ENCODE measurements at regions of chr6 and their contacts with region 1.

Region 1: GRCh38 chr6:36874443-36875249 is at the start of gene PPIL1:
- DNase-seq: peak; percentile 91 to 94 (median 92)
- H3K4me3 ChIP-seq: peak within 1 kb of the TSS; percentile 95 to 96
- H3K4me3 Mint-ChIP-seq: peak within 1 kb of the TSS; percentile 95 to 100 (median 98)
- H3K27ac ChIP-seq: peak within 1 kb of the TSS; percentile 87
- H3K27ac Mint-ChIP-seq: peak within 1 kb of the TSS; percentile 91 to 100 (median 98)
- H3K4me1 ChIP-seq: peaks cover 23% of the 10 kb centered on the region
- H3K4me1 Mint-ChIP-seq: peaks cover 22 to 37% (median 31%) of the 10 kb centered on the region in 4 donors
- H3K27me3 ChIP-seq: no peaks in the 10 kb centered on the region
- H3K27me3 Mint-ChIP-seq: peaks cover 0 to 1% of the 10 kb centered on the region in 2 donors
- total RNA-seq, gene PPIL1: 8.4 to 9.2 TPM

Region 2: GRCh38 chr6:36544228-36544627 is 330.4 kb before region 1 on chr6:
- CTCF ChIA-PET with region 1: no interaction called
- POLR2A ChIA-PET with region 1: no interaction called
- intact Hi-C with region 1: no loop called
- DNase-seq: peak; percentile 81 to 90 (median 84)
- H3K4me3 ChIP-seq: peak overlapping the region; percentile 89 to 99
- H3K4me3 Mint-ChIP-seq: peak overlapping the region; percentile 92 to 100 (median 96)
- H3K27ac ChIP-seq: peak overlapping the region; percentile 92
- H3K27ac Mint-ChIP-seq: peak overlapping the region; percentile 94 to 98 (median 96)
- H3K4me1 ChIP-seq: peaks cover 76% of the 10 kb centered on the region
- H3K4me1 Mint-ChIP-seq: peaks cover 38 to 88% (median 51%) of the 10 kb centered on the region in 4 donors
- H3K27me3 ChIP-seq: no peaks in the 10 kb centered on the region
- H3K27me3 Mint-ChIP-seq: no peaks in the 10 kb centered on the region

Region 3: DNA sequence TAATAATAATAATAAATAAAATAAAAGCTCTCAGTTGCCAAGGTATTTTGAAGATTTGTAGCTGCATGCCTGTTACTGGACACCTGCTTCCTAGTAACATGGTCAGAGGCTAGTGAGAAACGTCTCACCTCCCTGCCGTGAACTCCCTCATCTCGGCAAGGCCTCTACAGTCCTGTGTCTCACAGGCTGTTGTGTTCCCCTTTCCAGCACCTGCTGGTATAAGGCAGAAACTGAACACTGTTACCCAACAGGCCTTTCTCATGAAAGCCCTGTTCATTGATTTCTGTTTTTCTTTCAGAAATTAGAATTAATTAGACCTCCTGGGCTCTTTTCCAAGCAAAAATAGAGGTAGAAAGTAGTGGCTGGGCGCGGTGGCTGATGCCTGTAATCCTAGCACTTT is 298.1 kb before region 1 on chr6:
- CTCF ChIA-PET with region 1: no interaction called
- POLR2A ChIA-PET with region 1: no interaction called
- intact Hi-C with region 1: no loop called
- DNase-seq: no peak
- H3K4me3 ChIP-seq: no peak overlapping the region
- H3K4me3 Mint-ChIP-seq: no peak overlapping the region
- H3K27ac ChIP-seq: no peak overlapping the region
- H3K27ac Mint-ChIP-seq: no peak overlapping the region
- H3K4me1 ChIP-seq: no peaks in the 10 kb centered on the region
- H3K4me1 Mint-ChIP-seq: peaks cover 4 to 10% (median 7%) of the 10 kb centered on the region in 4 donors
- H3K27me3 ChIP-seq: no peaks in the 10 kb centered on the region
- H3K27me3 Mint-ChIP-seq: no peaks in the 10 kb centered on the region

Region 4: DNA sequence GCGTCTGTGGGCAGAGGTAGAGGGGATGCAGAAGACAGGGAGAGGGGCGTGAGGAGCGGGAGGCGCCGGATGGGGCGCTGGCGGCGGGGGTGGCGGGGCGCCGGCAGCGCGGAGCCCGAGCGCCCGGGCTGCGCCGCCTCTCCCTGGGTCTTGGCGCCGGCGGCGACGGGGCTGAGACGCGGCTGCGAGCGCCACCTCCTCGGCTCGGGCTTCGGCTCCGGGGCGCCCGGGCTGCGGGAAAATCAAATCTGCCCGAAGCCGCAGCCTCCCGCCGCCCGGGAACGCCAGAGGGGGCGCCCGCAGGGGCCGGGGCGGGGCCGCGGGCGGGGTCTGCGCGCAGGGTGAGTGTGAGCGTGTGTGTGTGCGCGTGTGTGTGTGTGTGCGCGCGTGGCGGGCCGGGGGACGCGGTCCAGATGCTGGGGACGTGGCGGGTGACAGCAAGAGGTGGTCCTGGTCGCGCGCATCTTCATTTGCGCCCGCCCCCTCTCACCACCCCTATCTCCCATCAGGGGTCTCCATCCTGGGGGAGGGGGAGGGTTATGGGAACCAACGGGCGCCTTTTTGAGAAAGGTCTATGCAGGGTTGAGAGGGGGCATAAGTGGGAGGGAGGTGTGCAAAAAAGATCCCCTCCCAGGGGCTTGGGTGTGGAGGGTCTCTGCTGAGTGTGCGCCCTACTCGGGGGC is 34.8 kb before region 1 on chr6:
- CTCF ChIA-PET with region 1: no interaction called
- POLR2A ChIA-PET with region 1: no interaction called
- intact Hi-C with region 1: no loop called
- DNase-seq: peak; percentile 47 to 56 (median 51)
- H3K4me3 ChIP-seq: peak overlapping the region in 1 of 2 donors; percentile 19
- H3K4me3 Mint-ChIP-seq: peak overlapping the region; percentile 73 to 84 (median 81)
- H3K27ac ChIP-seq: no peak overlapping the region
- H3K27ac Mint-ChIP-seq: peak overlapping the region in 1 of 7 donors; percentile 63
- H3K4me1 ChIP-seq: peaks cover 20% of the 10 kb centered on the region
- H3K4me1 Mint-ChIP-seq: peaks cover 3 to 15% (median 9%) of the 10 kb centered on the region in 4 donors
- H3K27me3 ChIP-seq: peaks cover 18% of the 10 kb centered on the region
- H3K27me3 Mint-ChIP-seq: peaks cover 4 to 19% of the 10 kb centered on the region in 2 donors

Region 5: DNA sequence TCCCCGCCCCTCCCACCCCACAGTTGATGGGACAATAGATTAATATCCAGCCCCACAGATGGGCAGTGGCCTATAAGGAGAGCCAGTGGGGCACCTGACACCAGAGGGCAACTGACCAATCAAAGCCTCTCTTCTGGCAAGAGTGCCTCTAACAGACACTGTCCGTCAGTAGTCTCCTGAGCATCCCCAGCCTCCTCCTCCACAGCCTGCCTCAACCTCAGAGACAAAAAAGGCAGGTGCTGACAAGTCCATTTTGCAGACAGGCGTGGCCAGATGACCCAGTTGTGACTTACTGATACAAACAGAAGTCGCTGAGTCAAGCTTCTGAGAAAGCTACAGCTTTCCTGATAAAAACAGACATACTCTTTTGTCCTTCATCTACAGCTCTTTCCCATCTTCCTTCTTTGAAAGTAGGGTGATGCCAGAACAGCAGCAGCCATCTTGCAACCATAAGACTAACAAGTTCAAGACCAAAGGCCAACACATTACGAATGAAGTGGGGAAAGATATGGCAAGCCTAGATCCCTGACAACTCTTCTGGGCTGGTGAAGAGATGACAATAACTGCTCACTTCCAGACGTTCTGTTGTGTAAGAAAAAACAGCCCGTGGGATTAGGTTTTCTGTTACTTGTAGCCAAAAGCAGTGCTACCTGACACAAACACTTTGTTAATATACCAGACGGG is 12.3 kb before region 1 on chr6:
- CTCF ChIA-PET with region 1: interaction called, 9 read pairs
- POLR2A ChIA-PET with region 1: interaction called, 22 read pairs
- intact Hi-C with region 1: no loop called
- DNase-seq: no peak
- H3K4me3 ChIP-seq: no peak overlapping the region
- H3K4me3 Mint-ChIP-seq: no peak overlapping the region
- H3K27ac ChIP-seq: no peak overlapping the region
- H3K27ac Mint-ChIP-seq: peak overlapping the region in 3 of 7 donors; percentile 6 to 53 (median 25)
- H3K4me1 ChIP-seq: peaks cover 16% of the 10 kb centered on the region
- H3K4me1 Mint-ChIP-seq: peaks cover 20 to 43% (median 25%) of the 10 kb centered on the region in 4 donors
- H3K27me3 ChIP-seq: no peaks in the 10 kb centered on the region
- H3K27me3 Mint-ChIP-seq: no peaks in the 10 kb centered on the region

Region 6: GRCh38 chr6:36897609-36898008 is 23.0 kb after region 1 on chr6:
- CTCF ChIA-PET with region 1: no interaction called
- POLR2A ChIA-PET with region 1: no interaction called
- intact Hi-C with region 1: no loop called
- DNase-seq: peak; percentile 13 to 45 (median 32)
- H3K4me3 ChIP-seq: no peak overlapping the region
- H3K4me3 Mint-ChIP-seq: no peak overlapping the region
- H3K27ac ChIP-seq: no peak overlapping the region
- H3K27ac Mint-ChIP-seq: peak overlapping the region in 2 of 7 donors; percentile 42 to 47
- H3K4me1 ChIP-seq: no peaks in the 10 kb centered on the region
- H3K4me1 Mint-ChIP-seq: peaks cover 4 to 20% (median 15%) of the 10 kb centered on the region in 4 donors
- H3K27me3 ChIP-seq: no peaks in the 10 kb centered on the region
- H3K27me3 Mint-ChIP-seq: no peaks in the 10 kb centered on the region

Measured in CD4-positive, alpha-beta memory T cell (primary cell).